HEK293 (cell line): ENCODE measurements at regions of chr19 and their contacts with region 1.

Region 1: GRCh38 chr19:42132851-42133528 is 744 bp upstream of the POU2F2 start:
- H3K4me3 ChIP-seq: no peak overlapping the region
- H3K27ac ChIP-seq: no peak overlapping the region
- H3K4me1 ChIP-seq: no peaks in the 10 kb centered on the region
- CTCF ChIP-seq: peak; percentile 98

Region 2: DNA sequence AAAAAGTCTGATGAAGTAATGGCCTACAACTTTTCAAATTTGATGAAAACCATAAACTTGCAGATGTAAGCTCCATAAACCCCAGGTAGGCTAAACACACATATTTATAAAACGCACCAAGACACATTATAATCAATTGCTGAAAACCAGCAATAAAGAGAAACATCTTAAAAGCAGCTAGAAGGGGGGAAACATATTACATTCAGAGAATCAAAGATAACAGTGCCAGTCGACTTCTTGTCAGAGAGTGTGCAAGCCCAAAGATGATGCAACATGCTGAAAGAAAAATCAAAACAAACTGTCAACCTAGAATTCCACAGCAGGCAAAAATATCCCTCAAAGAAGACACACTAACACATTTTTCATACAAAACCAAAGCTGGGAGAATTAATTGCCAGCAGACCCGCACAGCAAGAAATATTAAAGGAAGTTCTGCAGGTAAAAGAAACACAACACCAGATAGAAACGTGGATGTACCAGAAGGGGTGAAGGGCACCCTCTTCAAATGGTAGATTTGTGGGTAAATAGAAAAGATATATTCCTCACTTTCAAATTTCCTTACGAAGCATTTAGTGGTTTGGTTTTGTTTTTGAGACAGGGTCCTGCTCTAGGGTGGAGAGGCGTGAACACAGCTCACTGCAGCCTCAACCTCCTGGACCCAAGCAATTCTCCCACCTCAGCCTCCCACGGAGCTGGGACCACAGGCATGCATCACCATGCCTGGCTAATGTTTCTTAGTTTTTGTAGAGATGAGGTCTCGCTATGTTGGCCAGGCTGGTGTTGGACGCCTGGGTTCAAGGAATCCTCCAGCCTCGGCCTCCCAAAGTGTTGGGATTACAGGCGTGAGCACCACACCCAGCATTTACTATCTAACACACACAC is 122.5 kb before region 1 on chr19:
- CTCF ChIA-PET with region 1: no interaction called
- POLR2A ChIA-PET with region 1: no interaction called
- H3K4me3 ChIP-seq: no peak overlapping the region
- H3K27ac ChIP-seq: peak overlapping the region; percentile 52
- H3K4me1 ChIP-seq: peaks cover 3% of the 10 kb centered on the region; the same call in 1 of the 2 replicates
- CTCF ChIP-seq: no peak

Region 3: DNA sequence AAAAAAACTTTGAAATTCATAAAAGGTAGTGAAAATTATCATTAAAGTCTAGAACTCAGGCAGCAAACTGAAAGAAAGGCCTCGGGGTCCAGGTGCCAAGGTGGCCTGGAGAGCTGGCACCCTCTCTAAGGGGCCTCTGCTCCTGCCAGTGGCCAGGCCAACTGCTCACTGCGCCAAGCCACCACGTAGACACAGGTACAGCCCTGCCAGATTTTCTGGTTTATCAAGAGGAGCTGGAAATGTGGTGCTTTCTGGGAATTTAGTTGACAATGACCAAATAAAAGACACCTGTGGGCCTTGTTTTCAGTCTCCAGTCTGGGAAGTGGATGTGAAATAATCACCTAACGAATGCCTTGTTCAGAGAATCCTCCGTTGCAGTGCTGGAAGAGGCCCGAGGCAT is 34.2 kb before region 1 on chr19:
- CTCF ChIA-PET with region 1: interaction called, 13 read pairs
- POLR2A ChIA-PET with region 1: no interaction called
- H3K4me3 ChIP-seq: no peak overlapping the region
- H3K27ac ChIP-seq: no peak overlapping the region
- H3K4me1 ChIP-seq: no peaks in the 10 kb centered on the region
- CTCF ChIP-seq: no peak

Region 4: GRCh38 chr19:42121656-42122069 is 11.3 kb before region 1 on chr19:
- CTCF ChIA-PET with region 1: interaction called, 12 read pairs
- POLR2A ChIA-PET with region 1: interaction called, 3 read pairs
- H3K4me3 ChIP-seq: no peak overlapping the region
- H3K27ac ChIP-seq: no peak overlapping the region
- H3K4me1 ChIP-seq: no peaks in the 10 kb centered on the region
- CTCF ChIP-seq: no peak

Region 5: GRCh38 chr19:42184401-42184861 is 51.4 kb after region 1 on chr19:
- CTCF ChIA-PET with region 1: interaction called, 90 read pairs
- POLR2A ChIA-PET with region 1: no interaction called
- H3K4me3 ChIP-seq: no peak overlapping the region
- H3K27ac ChIP-seq: no peak overlapping the region
- H3K4me1 ChIP-seq: no peaks in the 10 kb centered on the region
- CTCF ChIP-seq: peak; percentile 92

Region 6: DNA sequence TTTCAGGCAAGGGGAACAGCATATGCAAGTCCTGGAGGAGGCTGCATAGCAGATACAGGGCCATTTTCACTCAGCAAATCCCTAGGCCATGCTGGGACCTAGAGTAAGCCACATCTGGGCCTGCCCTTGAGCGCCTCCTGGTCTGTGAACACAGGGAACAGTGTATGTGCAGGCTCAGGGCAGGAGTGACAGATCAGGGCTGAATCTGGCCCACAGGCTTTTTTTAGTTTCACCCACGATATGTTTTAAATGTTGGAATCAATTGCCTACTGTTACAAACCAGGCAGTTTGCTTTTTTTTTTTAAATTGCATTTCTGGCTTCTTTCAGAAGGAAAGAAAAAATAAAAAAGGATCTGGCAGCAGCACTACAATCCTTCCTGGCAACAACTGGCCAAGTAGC is 178.7 kb after region 1 on chr19:
- CTCF ChIA-PET with region 1: no interaction called
- POLR2A ChIA-PET with region 1: no interaction called
- H3K4me3 ChIP-seq: no peak overlapping the region
- H3K27ac ChIP-seq: no peak overlapping the region
- H3K4me1 ChIP-seq: no peaks in the 10 kb centered on the region; the same call in 1 of the 2 replicates
- CTCF ChIP-seq: peak; percentile 24; the same call in 1 of the 2 replicates

Region 7: DNA sequence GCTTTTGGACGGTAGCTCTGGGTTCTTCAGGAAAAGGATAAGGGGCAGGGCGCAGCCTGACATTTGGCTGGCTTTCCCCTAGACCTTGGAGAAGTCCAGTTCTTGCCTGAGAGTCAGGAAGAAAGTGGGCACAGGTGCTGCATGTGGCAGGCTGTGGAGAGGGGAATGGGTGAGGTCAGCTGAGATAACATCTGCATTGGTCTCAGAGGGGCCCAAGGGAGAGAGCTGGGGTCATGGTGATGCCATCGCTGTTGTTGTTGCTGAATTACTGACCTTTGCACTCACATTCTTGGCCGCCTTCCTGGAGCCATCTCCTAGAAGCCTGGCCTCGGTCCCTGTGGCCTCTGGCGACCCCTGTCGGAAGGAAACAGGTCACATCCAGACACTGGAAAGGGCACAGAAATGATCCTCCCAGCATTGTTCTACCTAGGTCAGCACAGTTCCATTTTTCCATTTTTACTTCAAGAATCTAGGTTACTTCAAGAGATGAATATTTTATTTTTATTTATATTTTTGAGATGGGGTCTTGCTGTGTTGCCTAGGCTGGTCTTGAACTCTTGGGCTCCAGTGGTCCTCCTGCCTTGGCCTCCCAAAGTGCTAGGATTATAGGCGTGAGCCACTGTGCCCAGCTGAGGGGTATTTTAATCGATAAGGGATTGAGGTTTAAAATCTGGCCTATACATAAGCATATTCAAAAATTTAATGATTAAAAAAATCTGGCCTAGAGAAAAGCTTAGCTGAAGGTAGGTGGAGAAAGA is 300.7 kb after region 1 on chr19:
- CTCF ChIA-PET with region 1: interaction called, 19 read pairs
- POLR2A ChIA-PET with region 1: no interaction called
- H3K4me3 ChIP-seq: no peak overlapping the region
- H3K27ac ChIP-seq: no peak overlapping the region
- H3K4me1 ChIP-seq: peaks cover 5% of the 10 kb centered on the region; the same call in 1 of the 2 replicates
- CTCF ChIP-seq: peak; percentile 53; the same call in 1 of the 2 replicates